CD8-positive, alpha-beta T cell (primary cell): ENCODE measurements at regions of chrX and their contacts with region 1.

Region 1: DNA sequence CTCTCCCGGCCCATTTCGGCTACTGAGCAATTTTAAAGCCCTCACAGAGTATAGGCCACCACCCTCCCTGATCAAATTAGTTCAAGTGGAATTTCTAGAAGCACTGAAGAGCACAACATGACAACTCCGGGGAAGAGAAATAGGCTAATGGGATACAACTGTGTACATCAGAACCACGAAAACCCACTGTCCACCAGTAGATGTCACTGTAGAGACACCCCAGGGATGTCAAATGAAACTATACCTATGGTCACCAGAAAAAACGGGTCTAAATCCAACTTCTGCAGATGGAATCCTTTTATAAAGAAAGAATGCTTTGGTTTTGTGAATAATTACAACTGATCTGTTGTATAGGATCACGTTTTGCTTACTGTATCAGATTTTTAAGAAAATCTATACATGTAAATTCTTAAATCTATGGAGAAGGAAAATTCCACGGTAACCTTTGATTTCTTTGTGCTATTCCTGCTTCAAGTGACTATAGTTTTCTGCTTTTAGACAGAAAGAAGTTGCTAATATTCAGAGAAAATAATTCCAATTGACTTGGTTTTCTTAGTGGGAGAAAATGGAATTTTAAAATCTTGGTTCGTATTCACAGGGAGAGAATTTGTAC is 29.5 kb upstream of the MAP3K15 start:
- DNase-seq: peak in 5 of 9 experiments; percentile 24 to 68 (median 30)
- ATAC-seq: peak; percentile 56
- H3K4me3 ChIP-seq: no peak overlapping the region
- H3K4me3 Mint-ChIP-seq: no peak overlapping the region
- H3K27ac ChIP-seq: no peak overlapping the region
- H3K27ac Mint-ChIP-seq: peak overlapping the region; percentile 73
- H3K4me1 ChIP-seq: no peaks in the 10 kb centered on the region
- H3K4me1 Mint-ChIP-seq: peaks cover 2% of the 10 kb centered on the region
- H3K27me3 ChIP-seq: no peaks in the 10 kb centered on the region
- H3K27me3 Mint-ChIP-seq: no peaks in the 10 kb centered on the region
- CTCF ChIP-seq: peak; percentile 44

Region 2: GRCh38 chrX:19046343-19047215 is 498.2 kb before region 1 on chrX:
- CTCF ChIA-PET with region 1: no interaction called
- POLR2A ChIA-PET with region 1: no interaction called
- intact Hi-C with region 1: loop called in 1 of 2 experiments (anchors 5 kb)
- DNase-seq: no peak
- ATAC-seq: no peak
- H3K4me3 ChIP-seq: no peak overlapping the region
- H3K4me3 Mint-ChIP-seq: no peak overlapping the region
- H3K27ac ChIP-seq: no peak overlapping the region
- H3K27ac Mint-ChIP-seq: no peak overlapping the region
- H3K4me1 ChIP-seq: no peaks in the 10 kb centered on the region
- H3K4me1 Mint-ChIP-seq: no peaks in the 10 kb centered on the region
- H3K27me3 ChIP-seq: no peaks in the 10 kb centered on the region
- H3K27me3 Mint-ChIP-seq: no peaks in the 10 kb centered on the region
- CTCF ChIP-seq: no peak

Region 3: DNA sequence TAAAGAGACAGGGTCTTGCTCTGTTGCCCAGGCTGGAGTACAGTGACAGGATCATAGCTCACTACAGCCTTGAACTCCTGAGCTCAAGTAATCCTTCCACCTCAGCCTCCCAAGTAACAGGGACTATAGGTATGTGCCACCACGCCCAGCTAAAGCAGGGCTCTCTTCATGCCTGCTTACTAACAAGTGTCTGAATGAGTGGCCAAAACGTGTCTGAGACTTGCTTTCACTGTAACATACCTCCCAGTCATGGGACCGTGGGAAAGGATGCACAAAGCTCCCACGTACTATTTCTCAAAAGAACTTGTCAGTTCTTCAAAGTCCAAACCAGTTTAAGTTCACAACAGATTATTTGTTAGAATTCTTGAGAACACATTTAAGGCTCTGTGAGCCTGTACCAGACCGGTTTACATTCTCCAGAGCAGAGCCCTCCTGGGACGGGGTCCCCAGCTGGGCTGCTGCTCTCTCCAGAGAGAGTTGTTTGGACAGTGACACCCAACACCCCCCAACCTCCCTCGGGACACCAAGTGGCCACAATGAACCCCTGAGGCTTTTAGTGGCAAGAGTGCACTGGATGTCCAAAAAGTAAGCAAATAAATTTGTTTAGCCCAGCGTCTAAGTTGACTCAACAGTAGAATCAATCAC is 318.5 kb after region 1 on chrX:
- CTCF ChIA-PET with region 1: no interaction called
- POLR2A ChIA-PET with region 1: no interaction called
- intact Hi-C with region 1: no loop called
- DNase-seq: no peak
- ATAC-seq: no peak
- H3K4me3 ChIP-seq: no peak overlapping the region
- H3K4me3 Mint-ChIP-seq: no peak overlapping the region
- H3K27ac ChIP-seq: no peak overlapping the region
- H3K27ac Mint-ChIP-seq: no peak overlapping the region
- H3K4me1 ChIP-seq: peaks cover 40% of the 10 kb centered on the region
- H3K4me1 Mint-ChIP-seq: peaks cover 56% of the 10 kb centered on the region
- H3K27me3 ChIP-seq: no peaks in the 10 kb centered on the region
- H3K27me3 Mint-ChIP-seq: no peaks in the 10 kb centered on the region
- CTCF ChIP-seq: no peak

Region 4: GRCh38 chrX:20066968-20067708 is 522.3 kb after region 1 on chrX:
- CTCF ChIA-PET with region 1: no interaction called
- POLR2A ChIA-PET with region 1: no interaction called
- intact Hi-C with region 1: loop called in 1 of 2 experiments (anchors 2 kb)
- DNase-seq: peak in 6 of 9 experiments; percentile 0 to 60 (median 16)
- ATAC-seq: peak; percentile 63
- H3K4me3 ChIP-seq: no peak overlapping the region
- H3K4me3 Mint-ChIP-seq: no peak overlapping the region
- H3K27ac ChIP-seq: no peak overlapping the region
- H3K27ac Mint-ChIP-seq: no peak overlapping the region
- H3K4me1 ChIP-seq: no peaks in the 10 kb centered on the region
- H3K4me1 Mint-ChIP-seq: no peaks in the 10 kb centered on the region
- H3K27me3 ChIP-seq: no peaks in the 10 kb centered on the region
- H3K27me3 Mint-ChIP-seq: no peaks in the 10 kb centered on the region
- CTCF ChIP-seq: peak; percentile 31